Stomach (tissue), 19 donors: ENCODE measurements at regions of chr17 and their contacts with region 1.

Region 1: DNA sequence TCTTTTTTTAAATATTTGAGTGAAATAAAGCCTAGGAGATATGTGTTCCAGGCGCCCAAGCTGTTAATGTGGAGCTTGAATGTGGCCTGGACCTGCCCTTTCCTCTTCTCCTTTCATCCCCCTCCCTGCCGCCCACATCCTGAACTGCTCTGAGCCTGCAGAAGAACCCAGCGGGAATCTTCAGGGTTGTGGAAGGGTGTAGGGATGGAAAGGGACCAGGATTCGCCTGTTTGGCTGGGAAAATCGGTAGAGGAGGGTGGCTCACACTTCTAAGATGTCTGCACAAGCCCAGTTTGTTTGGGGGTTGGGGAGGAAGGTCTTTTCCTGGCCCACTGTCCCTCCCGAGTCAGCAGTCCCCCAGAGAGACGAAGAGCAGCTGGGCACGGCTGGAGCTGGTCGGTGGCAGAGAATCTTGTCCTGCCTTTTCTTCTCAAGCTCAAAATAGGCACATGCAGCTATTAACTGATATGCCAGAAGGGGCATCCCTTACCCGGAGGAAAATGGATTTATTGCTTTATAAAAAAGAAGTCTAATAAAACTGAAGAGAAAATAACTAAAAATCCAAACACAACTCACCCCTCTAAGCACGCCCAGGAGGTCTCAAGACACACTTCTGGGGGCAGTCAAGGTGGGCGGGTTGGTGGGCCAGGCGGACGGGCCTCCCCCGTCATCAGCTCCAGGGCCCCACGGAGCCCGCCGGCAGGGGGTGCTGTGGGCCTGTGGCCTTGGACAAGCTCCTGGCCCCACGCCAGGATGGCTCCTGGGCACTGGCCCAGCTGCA is 11.5 kb upstream of the PITPNA start:
- DNase-seq: peak; percentile 92 to 95
- H3K4me3 ChIP-seq: no peak overlapping the region
- H3K27ac ChIP-seq: peak overlapping the region in 4 of 5 donors; percentile 57 to 93 (median 88)
- H3K4me1 ChIP-seq: peaks cover 34 to 52% (median 45%) of the 10 kb centered on the region in 4 donors
- H3K27me3 ChIP-seq: no peaks in the 10 kb centered on the region
- CTCF ChIP-seq: peak in 5 of 7 experiments; percentile 84 to 96 (median 94)
- EP300 ChIP-seq: no peak
- POLR2A ChIP-seq: no peak

Region 2: DNA sequence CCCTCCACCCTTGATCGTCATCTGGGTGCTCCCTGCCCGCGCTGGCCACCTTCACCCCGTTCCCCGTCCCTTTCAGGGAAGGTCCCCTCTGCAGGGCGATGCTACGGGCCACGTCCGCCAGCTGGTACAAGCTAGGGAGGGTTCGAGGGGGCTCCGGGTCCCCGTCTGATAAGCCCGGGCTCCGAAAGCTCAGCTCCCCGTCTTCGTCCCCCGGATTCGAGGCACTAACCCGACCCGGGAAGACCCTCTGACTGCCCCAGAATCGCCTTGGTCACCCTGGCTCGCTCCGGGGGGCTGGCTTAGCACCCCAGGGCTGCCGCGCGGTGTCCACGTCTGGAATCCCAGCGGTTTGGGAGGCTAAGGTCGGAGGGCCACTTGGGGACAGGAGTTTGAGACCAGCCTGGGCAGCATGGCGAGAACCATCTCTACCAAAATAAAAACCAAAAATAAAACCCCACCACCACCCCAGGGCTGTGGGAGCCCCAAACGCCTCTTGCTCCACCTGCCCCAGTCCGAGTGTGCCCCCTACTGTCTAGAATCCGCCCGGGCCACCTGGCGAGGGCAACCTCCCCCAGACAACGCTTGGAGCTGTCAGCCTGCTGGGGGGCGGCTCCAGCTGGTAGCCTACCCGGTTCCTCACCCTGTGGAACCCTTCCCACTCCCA is 55.7 kb after region 1 on chr17:
- intact Hi-C with region 1: loop called (anchors 5 kb)
- DNase-seq: peak; percentile 83 to 84
- H3K4me3 ChIP-seq: peak overlapping the region; percentile 62 to 93 (median 76)
- H3K27ac ChIP-seq: peak overlapping the region; percentile 90 to 95 (median 92)
- H3K4me1 ChIP-seq: peaks cover 31 to 47% (median 46%) of the 10 kb centered on the region in 4 donors
- H3K27me3 ChIP-seq: no peaks in the 10 kb centered on the region
- CTCF ChIP-seq: peak in 5 of 7 experiments; percentile 56 to 89 (median 66)
- EP300 ChIP-seq: no peak
- POLR2A ChIP-seq: no peak

Region 3: DNA sequence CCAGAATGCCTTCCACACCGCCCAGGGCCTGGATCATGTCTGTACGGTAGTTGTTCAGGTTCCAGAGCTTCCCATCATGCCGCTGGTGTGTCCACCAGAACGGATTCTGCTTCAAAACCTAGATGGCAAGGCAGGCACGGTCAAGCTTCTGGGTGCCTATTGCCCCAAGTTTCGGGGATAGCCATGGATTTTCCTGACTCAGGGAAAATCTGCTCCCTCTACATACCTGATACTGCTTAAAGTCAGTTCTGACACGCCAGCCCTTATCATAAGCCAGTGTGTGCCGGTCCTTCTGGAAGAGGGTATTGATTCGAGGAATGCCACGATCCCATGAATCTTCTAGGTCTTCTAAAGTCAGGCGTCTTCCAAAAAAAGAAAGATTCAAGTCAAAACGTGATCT is 86.9 kb after region 1 on chr17:
- intact Hi-C with region 1: no loop called
- DNase-seq: no peak
- H3K4me3 ChIP-seq: no peak overlapping the region
- H3K27ac ChIP-seq: no peak overlapping the region
- H3K4me1 ChIP-seq: no peaks in the 10 kb centered on the region
- H3K27me3 ChIP-seq: no peaks in the 10 kb centered on the region
- CTCF ChIP-seq: no peak
- EP300 ChIP-seq: no peak
- POLR2A ChIP-seq: no peak